Spleen (tissue), 13 donors: ENCODE measurements at regions of chr12 and their contacts with region 1.

Region 1: GRCh38 chr12:89475203-89475990 is 49.2 kb downstream of the GALNT4 start:
- DNase-seq: no peak
- H3K4me3 ChIP-seq: no peak overlapping the region
- H3K27ac ChIP-seq: peak overlapping the region in 4 of 8 donors; percentile 11 to 71 (median 28)
- H3K4me1 ChIP-seq: peaks cover 7 to 48% (median 19%) of the 10 kb centered on the region in 6 donors
- H3K27me3 ChIP-seq: no peaks in the 10 kb centered on the region
- CTCF ChIP-seq: no peak
- POLR2A ChIP-seq: no peak

Region 2: DNA sequence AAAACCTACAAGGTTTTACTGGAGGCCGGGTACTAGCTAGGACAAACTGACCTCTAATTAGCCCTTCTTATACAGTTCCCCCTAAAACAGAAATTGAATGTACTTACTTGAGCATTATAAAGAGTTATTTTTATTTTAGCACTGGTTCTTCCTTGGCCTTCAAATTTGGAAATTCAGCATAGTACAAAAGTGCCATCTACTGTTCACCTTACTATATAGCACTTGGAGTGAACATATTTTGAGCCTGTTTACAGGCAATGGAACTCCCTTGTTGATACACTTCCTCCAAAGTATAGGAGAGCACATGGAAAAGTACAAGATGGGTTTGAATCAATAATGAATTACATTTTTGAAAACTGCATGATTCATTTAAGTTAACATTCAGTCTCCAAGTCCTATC is 54.3 kb after region 1 on chr12:
- intact Hi-C with region 1: loop called (anchors 2 kb)
- DNase-seq: no peak
- H3K4me3 ChIP-seq: no peak overlapping the region
- H3K27ac ChIP-seq: peak overlapping the region in 1 of 8 donors; percentile 41
- H3K4me1 ChIP-seq: peaks cover 5 to 42% (median 25%) of the 10 kb centered on the region in 6 donors
- H3K27me3 ChIP-seq: no peaks in the 10 kb centered on the region
- CTCF ChIP-seq: peak; percentile 28 to 79 (median 67)
- POLR2A ChIP-seq: no peak